Psoas muscle (tissue), 8 donors: ENCODE measurements at regions of chr9 and their contacts with region 1.

Region 1: DNA sequence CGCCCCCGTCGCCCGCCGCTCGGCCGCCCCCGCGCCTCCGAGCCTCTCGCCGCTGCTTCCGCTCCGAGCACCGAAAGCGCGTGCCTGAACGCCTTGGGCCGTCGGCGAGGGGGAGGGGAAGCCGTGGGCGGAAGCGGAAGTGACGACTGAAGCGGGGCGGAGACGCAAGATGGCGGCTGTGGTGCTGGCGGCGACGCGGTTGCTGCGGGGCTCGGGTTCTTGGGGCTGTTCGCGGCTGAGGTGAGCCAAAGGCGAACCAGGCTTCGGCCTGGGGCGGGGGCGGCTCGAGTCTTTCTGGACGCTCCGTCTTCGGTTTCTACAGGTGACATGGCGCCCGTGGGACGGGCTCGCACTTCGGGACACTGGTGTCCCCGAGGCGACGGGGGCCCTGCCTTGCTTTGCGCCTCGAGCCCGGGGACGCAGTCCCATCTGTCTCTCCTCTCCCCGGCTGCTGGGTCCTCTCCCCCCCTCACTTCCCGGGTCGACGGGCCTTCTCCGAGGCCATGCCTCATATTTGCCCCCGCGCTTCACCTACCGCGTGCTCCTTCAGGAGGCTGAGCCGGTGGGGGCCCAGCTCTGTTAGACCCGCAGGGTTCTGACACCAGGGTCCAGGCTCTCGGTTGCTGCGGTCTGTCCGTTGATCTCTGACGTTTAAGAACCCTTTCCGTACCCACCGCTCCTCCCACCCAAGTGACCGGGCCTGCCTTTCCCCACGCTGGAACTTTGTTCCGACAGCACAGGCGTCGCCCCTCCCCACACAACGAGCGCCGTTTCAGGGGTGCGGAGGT is at the starts of genes ENTR1 and PMPCA:
- DNase-seq: peak; percentile 94 to 96
- ATAC-seq: peak; percentile 91 to 97 (median 92)
- H3K4me3 ChIP-seq: peak within 1 kb of the TSS; percentile 99
- H3K27ac ChIP-seq: peak within 1 kb of the TSS; percentile 94
- H3K4me1 ChIP-seq: peaks cover 25% of the 10 kb centered on the region
- H3K27me3 ChIP-seq: no peaks in the 10 kb centered on the region
- CTCF ChIP-seq: no peak
- total RNA-seq, gene ENTR1: 16.0 to 39.0 (median 32.3) TPM
- total RNA-seq, gene PMPCA: 52.4 to 68.7 (median 60.6) TPM

Region 2: GRCh38 chr9:136363606-136364370 is 46.9 kb before region 1 on chr9 and contains the start of gene DNLZ:
- intact Hi-C with region 1: loop called in 1 of 2 experiments (anchors 2 kb)
- DNase-seq: peak; percentile 89 to 92
- ATAC-seq: peak; percentile 71 to 78 (median 75)
- H3K4me3 ChIP-seq: peak within 1 kb of the TSS; percentile 93
- H3K27ac ChIP-seq: peak within 1 kb of the TSS; percentile 98
- H3K4me1 ChIP-seq: peaks cover 12% of the 10 kb centered on the region
- H3K27me3 ChIP-seq: peaks cover 0 to 9% (median 0%) of the 10 kb centered on the region in 3 donors
- CTCF ChIP-seq: peak; percentile 98
- total RNA-seq, gene DNLZ: 8.2 to 29.6 (median 21.1) TPM

Region 3: GRCh38 chr9:136605988-136606660 is 195.4 kb after region 1 on chr9:
- intact Hi-C with region 1: no loop called
- DNase-seq: no peak
- ATAC-seq: peak in 3 of 4 donors; percentile 26 to 44 (median 36)
- H3K4me3 ChIP-seq: no peak overlapping the region
- H3K27ac ChIP-seq: no peak overlapping the region
- H3K4me1 ChIP-seq: peaks cover 6% of the 10 kb centered on the region
- H3K27me3 ChIP-seq: peaks cover 0 to 6% (median 0%) of the 10 kb centered on the region in 3 donors
- CTCF ChIP-seq: no peak